ENCODE measurements at regions of chr17 and their contacts with region 1.

Region 1: GRCh38 chr17:49357516-49357915 is 4.5 kb downstream of the ZNF652 start:
- DNase-seq: no peak
- H3K4me3 ChIP-seq: no peak overlapping the region
- H3K27ac ChIP-seq: peak overlapping the region; percentile 92 to 98 (median 98)
- H3K4me1 ChIP-seq: peaks cover 18 to 63% (median 44%) of the 10 kb centered on the region in 4 donors
- H3K27me3 ChIP-seq: no peaks in the 10 kb centered on the region
- CTCF ChIP-seq: no peak
- EP300 ChIP-seq: no peak
- POLR2A ChIP-seq: no peak

Region 2: GRCh38 chr17:49290690-49291359 is 66.7 kb before region 1 on chr17:
- in situ Hi-C with region 1: no loop called
- intact Hi-C with region 1: no loop called
- DNase-seq: no peak
- H3K4me3 ChIP-seq: no peak overlapping the region
- H3K27ac ChIP-seq: no peak overlapping the region
- H3K4me1 ChIP-seq: peaks cover 0 to 6% (median 0%) of the 10 kb centered on the region in 4 donors
- H3K27me3 ChIP-seq: no peaks in the 10 kb centered on the region
- CTCF ChIP-seq: peak; percentile 50 to 70 (median 68)
- EP300 ChIP-seq: no peak
- POLR2A ChIP-seq: no peak

Region 3: GRCh38 chr17:49379926-49380325 is 22.4 kb after region 1 on chr17:
- in situ Hi-C with region 1: no loop called
- intact Hi-C with region 1: loop called (anchors 2 kb)
- DNase-seq: no peak
- H3K4me3 ChIP-seq: no peak overlapping the region
- H3K27ac ChIP-seq: no peak overlapping the region
- H3K4me1 ChIP-seq: no peaks in the 10 kb centered on the region
- H3K27me3 ChIP-seq: no peaks in the 10 kb centered on the region
- CTCF ChIP-seq: no peak
- EP300 ChIP-seq: no peak
- POLR2A ChIP-seq: no peak